GM23248 (cell line): ENCODE measurements at regions of chr5 and their contacts with region 1.

Region 1: GRCh38 chr5:152532714-152533113 is 127.6 kb upstream of the NMUR2 start:
- DNase-seq: peak; percentile 65
- H3K4me3 ChIP-seq: no peak overlapping the region
- H3K27ac ChIP-seq: no peak overlapping the region
- H3K4me1 ChIP-seq: no peaks in the 10 kb centered on the region
- H3K27me3 ChIP-seq: no peaks in the 10 kb centered on the region

Region 2: DNA sequence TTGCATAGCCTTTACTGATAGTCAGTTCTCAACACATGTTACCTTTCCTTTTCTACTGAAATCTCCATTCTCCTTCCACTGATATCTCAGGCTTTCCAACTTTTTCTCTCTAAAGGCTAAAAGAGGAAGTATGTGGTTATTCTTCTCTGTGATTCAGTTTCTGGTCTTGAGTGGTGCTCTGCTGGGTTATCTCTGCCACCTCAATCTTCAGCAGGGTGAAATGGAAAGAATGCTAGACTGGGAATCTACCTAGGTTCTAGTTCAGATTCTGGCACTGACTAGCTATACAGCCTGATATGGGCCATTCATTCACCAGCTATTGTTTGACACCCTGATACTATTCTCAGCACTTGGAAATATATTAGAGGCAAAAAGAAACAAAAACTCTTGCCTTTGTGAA is 832.8 kb after region 1 on chr5:
- in situ Hi-C with region 1: no loop called
- DNase-seq: no peak
- H3K4me3 ChIP-seq: no peak overlapping the region
- H3K27ac ChIP-seq: no peak overlapping the region
- H3K4me1 ChIP-seq: no peaks in the 10 kb centered on the region
- H3K27me3 ChIP-seq: no peaks in the 10 kb centered on the region

Region 3: GRCh38 chr5:154157483-154158378 is 1625.0 kb after region 1 on chr5:
- in situ Hi-C with region 1: loop called (anchors 25 kb)
- DNase-seq: peak; percentile 20
- H3K4me3 ChIP-seq: no peak overlapping the region
- H3K27ac ChIP-seq: no peak overlapping the region
- H3K4me1 ChIP-seq: peaks cover 9% of the 10 kb centered on the region; the same call in 1 of the 2 replicates
- H3K27me3 ChIP-seq: no peaks in the 10 kb centered on the region; the same call in 1 of the 2 replicates